Endothelial cell of umbilical vein (primary cell): ENCODE measurements at regions of chr11 and their contacts with region 1.

Region 1: GRCh38 chr11:58579192-58580129 is 598 bp downstream of the ZFP91 start:
- DNase-seq: peak; percentile 88
- H3K4me3 ChIP-seq: peak overlapping the region; percentile 59 to 92 (median 76)
- H3K27ac ChIP-seq: peak overlapping the region; percentile 95
- H3K4me1 ChIP-seq: peaks cover 38% of the 10 kb centered on the region
- H3K27me3 ChIP-seq: no peaks in the 10 kb centered on the region
- CTCF ChIP-seq: peak; percentile 84 to 92
- POLR2A ChIP-seq: peak; percentile 97

Region 2: DNA sequence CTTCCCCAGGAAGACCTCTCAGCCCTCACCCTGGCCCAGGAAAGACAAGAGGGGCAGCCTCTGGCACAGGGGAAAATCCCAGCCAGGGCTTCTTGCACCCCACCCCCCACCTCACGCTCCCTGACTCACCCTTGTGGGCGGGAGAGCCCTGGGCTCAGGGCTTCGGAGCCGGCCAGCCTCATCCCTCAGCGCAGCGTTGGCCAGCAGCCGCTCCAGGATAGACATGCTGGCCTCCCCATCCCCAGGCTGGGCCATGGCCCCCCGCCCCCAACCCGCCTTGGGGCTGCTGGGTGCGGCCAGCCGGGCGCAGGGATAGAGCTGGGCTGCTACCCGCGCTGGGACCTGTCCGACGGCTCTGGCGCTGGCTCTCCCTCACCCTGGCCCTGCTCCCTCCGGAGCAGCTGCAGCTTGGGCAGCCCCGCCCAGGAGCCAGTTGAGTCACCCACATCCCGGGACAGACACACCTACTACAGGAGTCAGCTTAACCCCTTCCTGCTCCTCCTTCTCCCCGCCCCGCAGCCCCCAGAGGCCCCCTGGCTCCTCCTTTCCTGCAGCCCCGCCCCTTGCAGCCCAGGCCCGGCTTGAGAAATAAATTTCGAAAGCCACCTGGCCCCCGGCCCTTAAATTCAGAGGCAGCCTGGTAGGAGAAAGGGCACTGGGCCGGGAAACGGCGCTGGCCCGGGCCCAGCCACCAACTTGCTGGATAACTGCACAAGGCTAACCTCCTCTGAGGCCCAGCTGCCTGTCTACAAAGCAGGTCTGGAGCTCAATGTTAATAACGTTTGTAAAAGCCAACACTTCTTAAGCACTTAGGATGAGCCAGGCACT is 1268.1 kb before region 1 on chr11:
- CTCF ChIA-PET with region 1: no interaction called
- POLR2A ChIA-PET with region 1: no interaction called
- dilution Hi-C with region 1: no loop called
- intact Hi-C with region 1: loop called (anchors 10 kb)
- DNase-seq: peak; percentile 96
- H3K4me3 ChIP-seq: peak overlapping the region; percentile 0 to 56 (median 24)
- H3K27ac ChIP-seq: peak overlapping the region; percentile 53
- H3K4me1 ChIP-seq: peaks cover 18% of the 10 kb centered on the region
- H3K27me3 ChIP-seq: no peaks in the 10 kb centered on the region
- CTCF ChIP-seq: no peak
- POLR2A ChIP-seq: peak; percentile 81

Region 3: GRCh38 chr11:57712256-57713150 is 867.0 kb before region 1 on chr11 and contains the start of gene TMX2:
- CTCF ChIA-PET with region 1: no interaction called
- POLR2A ChIA-PET with region 1: no interaction called
- dilution Hi-C with region 1: no loop called
- intact Hi-C with region 1: loop called (anchors 2 kb)
- DNase-seq: peak; percentile 99
- H3K4me3 ChIP-seq: peak within 1 kb of the TSS; percentile 64 to 100 (median 78)
- H3K27ac ChIP-seq: peak within 1 kb of the TSS; percentile 67
- H3K4me1 ChIP-seq: peaks cover 18% of the 10 kb centered on the region
- H3K27me3 ChIP-seq: no peaks in the 10 kb centered on the region
- CTCF ChIP-seq: no peak
- POLR2A ChIP-seq: no peak
- total RNA-seq, gene TMX2: 66.3 and 67.7 TPM in 2 replicates

Region 4: DNA sequence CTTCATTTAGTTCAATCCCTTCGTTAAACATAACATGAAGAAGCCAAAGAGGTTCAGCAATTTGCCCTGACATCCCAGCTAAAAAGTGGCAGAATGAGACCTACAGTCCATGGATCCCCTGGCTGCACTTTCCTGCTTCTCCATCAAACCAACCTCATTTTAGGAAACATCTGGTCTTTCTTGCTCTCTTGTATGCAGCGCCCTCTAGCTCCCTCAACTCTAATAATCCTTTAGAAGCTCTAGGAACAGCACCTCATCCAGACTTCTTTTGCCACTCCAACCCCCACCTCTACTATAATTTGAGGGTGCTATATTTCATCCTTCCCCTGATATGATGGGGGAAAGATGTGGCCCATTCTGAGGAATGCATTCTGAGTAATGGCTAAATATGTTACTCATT is 50.4 kb after region 1 on chr11:
- CTCF ChIA-PET with region 1: interaction called, 37 read pairs
- POLR2A ChIA-PET with region 1: no interaction called
- dilution Hi-C with region 1: no loop called
- intact Hi-C with region 1: loop called (anchors 1 kb)
- DNase-seq: peak; percentile 46
- H3K4me3 ChIP-seq: no peak overlapping the region
- H3K27ac ChIP-seq: no peak overlapping the region
- H3K4me1 ChIP-seq: peaks cover 13% of the 10 kb centered on the region
- H3K27me3 ChIP-seq: no peaks in the 10 kb centered on the region
- CTCF ChIP-seq: peak; percentile 41 to 65
- POLR2A ChIP-seq: no peak

Region 5: DNA sequence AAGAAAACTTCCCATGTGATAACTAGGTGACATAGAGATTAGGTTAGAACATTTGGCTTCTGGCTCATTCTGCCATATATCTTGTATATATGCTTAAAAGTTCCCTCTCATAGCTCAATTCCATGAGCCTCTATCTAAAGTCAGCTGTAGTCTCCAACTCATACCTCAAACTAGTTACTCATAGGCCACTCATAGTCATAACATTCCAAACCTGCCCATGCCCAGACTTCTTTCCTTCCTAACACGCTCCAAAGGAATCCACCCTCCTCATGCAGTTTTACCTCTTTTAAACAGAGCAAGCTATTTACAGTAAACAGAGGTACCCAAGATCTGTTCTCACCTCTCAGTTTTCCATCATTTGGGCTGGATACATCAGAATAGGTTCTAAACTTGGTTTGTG is 225.6 kb after region 1 on chr11:
- CTCF ChIA-PET with region 1: no interaction called
- POLR2A ChIA-PET with region 1: no interaction called
- dilution Hi-C with region 1: no loop called
- intact Hi-C with region 1: no loop called
- DNase-seq: no peak
- H3K4me3 ChIP-seq: no peak overlapping the region
- H3K27ac ChIP-seq: no peak overlapping the region
- H3K4me1 ChIP-seq: no peaks in the 10 kb centered on the region
- H3K27me3 ChIP-seq: no peaks in the 10 kb centered on the region
- CTCF ChIP-seq: no peak
- POLR2A ChIP-seq: no peak

Region 6: GRCh38 chr11:59106363-59107336 is 527.2 kb after region 1 on chr11 and contains the start of gene FAM111B:
- CTCF ChIA-PET with region 1: no interaction called
- POLR2A ChIA-PET with region 1: no interaction called
- dilution Hi-C with region 1: no loop called
- intact Hi-C with region 1: loop called (anchors 2 kb)
- DNase-seq: peak; percentile 91
- H3K4me3 ChIP-seq: peak within 1 kb of the TSS; percentile 44 to 74 (median 56)
- H3K27ac ChIP-seq: peak within 1 kb of the TSS; percentile 39
- H3K4me1 ChIP-seq: peaks cover 20% of the 10 kb centered on the region
- H3K27me3 ChIP-seq: peaks cover 0 to 3% of the 10 kb centered on the region in 2 experiments
- CTCF ChIP-seq: no peak
- POLR2A ChIP-seq: peak; percentile 29
- total RNA-seq, gene FAM111B: 17.4 and 21.9 TPM in 2 replicates

Region 7: GRCh38 chr11:59550368-59550841 is 970.9 kb after region 1 on chr11:
- CTCF ChIA-PET with region 1: no interaction called
- POLR2A ChIA-PET with region 1: no interaction called
- dilution Hi-C with region 1: no loop called
- intact Hi-C with region 1: loop called (anchors 2 kb)
- DNase-seq: peak; percentile 96
- H3K4me3 ChIP-seq: peak overlapping the region; percentile 25 to 88 (median 50)
- H3K27ac ChIP-seq: peak overlapping the region; percentile 88
- H3K4me1 ChIP-seq: peaks cover 21% of the 10 kb centered on the region
- H3K27me3 ChIP-seq: no peaks in the 10 kb centered on the region
- CTCF ChIP-seq: peak; percentile 24 to 60
- POLR2A ChIP-seq: no peak